Head of caudate nucleus (tissue), 42 donors: ENCODE measurements at regions of chr9 and their contacts with region 1.

Region 1: GRCh38 chr9:129139993-129140396 is 28.8 kb downstream of the PTPA start:
- DNase-seq: peak; percentile 72 to 97 (median 88)

Region 2: GRCh38 chr9:128979111-128979510 is 160.9 kb before region 1 on chr9:
- intact Hi-C with region 1: no loop called
- DNase-seq: no peak

Region 3: DNA sequence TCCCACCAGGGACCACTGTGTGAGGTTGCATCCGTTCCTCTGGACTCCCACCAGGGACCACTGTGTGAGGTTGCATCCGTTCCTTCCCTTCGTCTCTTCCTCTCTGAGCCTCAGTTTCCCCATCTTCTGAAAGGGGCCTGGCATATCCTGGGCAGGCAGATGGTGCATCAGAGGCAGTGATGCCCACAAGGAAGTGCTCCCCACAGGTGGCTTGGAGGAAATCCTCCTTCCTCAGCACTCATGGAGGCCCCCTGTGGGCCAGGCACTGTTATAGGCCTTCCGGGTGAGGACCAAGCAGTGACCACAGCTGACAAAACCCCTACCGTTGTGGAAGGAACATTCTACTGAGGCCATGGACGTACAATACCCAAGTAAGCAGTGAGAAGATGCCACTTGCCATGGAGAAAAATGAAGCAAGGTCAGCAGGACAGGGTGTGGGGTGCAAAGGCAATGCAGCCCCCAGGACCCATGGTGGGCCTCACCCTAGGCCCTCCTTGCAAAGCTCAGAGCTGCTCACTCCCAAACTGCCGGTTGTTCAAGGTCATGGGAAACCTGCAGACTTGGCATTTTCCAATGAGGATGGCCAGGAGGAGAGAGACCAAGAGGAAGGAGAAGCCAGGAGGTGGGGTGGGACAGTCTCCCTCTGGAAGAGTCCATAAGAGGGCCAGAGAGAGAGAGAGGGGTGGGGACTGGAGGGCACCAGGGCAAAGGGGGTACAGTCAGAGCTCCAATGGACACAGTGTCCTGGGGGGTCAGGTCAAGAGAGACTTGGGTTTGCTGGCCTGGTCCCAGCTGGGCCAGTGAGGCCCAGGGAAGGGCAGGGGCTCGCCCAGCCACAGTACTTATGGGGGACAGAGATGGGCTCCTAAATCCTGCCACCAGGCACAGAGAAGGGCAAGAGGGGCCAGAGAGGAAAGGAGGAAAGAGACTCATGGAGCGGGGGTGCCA is 429.8 kb after region 1 on chr9:
- intact Hi-C with region 1: loop called (anchors 5 kb)
- DNase-seq: peak in 4 of 42 donors; percentile 18 to 70 (median 42)

Region 4: DNA sequence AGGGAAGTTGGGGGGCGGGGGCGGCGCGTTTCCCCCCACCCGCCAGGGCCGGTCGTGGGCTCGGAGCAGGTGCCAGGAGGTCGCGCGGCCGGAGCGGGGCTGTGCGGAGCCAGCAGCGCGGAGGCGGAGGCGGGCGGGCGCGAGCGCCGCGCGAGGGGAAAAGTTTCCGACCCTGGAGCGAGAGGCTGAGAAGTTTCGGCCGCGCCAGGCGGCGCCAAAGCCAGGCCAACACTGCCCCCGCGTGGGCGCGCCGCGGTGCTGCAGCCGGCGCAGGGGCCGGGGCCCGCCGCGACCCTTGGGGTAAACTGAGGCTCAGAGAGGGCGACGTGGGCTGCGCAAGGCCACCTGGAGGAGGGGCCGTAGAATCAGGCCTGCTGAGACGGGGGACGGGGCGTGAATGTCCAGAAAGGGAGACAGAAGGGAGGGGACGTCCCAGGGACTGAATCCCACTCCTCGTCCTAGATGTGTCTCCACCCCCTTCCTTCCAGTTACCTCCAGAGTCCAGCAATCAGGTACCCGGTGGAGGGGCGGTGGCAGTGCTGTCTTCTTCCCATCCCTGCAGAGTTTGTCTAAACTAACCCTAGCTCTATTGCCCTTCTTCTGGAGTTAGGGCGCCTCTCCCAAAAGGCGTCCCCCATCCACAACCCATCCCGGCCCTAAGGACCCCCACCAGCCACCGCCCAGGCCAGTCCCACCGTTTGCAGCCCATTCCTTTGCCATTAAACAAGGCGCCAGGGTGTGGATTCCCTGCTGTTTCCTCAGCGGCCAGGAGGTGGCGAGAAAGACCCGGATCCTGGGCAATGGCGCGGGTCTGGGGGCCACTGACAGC is 470.7 kb after region 1 on chr9:
- intact Hi-C with region 1: loop called (anchors 2 kb)
- DNase-seq: peak; percentile 65 to 89 (median 80)